ENCODE measurements at regions of chr1 and their contacts with region 1.

Region 1: GRCh38 chr1:44347280-44347679 is 7.8 kb downstream of the ERI3 start:
- DNase-seq: no peak
- H3K4me3 Mint-ChIP-seq: no peak overlapping the region
- H3K27ac Mint-ChIP-seq: no peak overlapping the region
- H3K4me1 Mint-ChIP-seq: peaks cover 4% of the 10 kb centered on the region
- H3K27me3 Mint-ChIP-seq: no peaks in the 10 kb centered on the region

Region 2: DNA sequence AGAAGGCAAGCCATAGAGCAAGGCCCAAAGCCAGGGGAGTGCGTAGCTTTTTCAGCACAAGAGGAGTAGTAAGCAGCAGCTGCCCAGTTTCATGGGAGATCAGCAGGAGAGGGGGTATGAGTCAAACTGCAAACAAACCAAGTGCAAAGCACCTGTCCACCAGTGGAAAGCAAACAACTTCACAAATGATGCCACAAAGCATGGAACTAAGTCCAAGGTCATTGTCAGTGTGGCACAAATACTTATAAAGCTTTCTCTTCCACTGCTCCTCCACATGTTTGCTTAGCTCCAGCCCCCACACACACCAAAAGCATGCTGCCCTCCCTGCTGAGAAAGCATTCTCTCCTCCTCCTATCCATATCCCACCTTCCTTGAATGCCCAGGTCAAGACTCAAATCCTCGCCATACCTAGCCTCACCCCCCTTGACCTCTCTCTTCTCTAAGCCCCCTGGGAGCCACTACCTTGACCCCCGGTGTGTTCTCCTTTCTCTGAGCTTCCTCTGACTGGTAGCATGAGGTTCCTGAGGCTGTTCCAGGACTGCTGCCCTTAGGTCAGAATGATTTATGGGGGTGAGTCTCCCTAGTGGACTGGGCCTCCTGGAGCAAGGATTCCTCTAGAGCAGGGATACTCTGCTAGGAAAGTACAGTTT is 63.6 kb before region 1 on chr1:
- intact Hi-C with region 1: loop called (anchors 10 kb)
- DNase-seq: no peak
- H3K4me3 Mint-ChIP-seq: no peak overlapping the region
- H3K27ac Mint-ChIP-seq: peak overlapping the region; percentile 13
- H3K4me1 Mint-ChIP-seq: no peaks in the 10 kb centered on the region
- H3K27me3 Mint-ChIP-seq: no peaks in the 10 kb centered on the region